H1 (cell line): ENCODE measurements at regions of chr5 and their contacts with region 1.

Region 1: DNA sequence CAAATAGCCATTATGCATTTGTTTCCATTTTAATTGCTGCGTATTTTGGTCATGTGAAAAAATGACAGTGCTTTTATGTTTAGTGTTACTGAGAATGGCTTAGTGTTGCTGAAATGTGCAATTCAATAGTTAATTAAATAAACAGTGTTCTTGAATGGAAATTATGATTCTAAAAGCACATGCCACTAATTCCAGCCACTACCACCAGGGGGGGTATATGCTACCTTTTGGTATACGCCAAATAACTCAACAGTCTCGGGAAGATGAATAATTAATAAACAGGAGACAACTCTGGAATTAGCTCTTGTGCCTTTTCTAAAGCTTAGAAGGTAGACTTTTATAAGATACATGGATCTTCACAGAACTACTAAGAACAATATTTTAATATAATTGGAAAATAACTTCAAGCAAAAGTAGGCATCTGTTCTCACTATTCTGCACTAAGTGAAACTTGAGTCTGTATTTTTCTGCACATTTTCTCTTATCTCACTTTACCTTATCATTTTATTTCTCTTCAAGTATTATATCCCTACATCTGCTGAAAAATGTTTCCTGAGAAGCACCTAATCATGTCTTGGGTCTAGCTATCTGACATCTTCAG is 83.5 kb upstream of the MINAR2 start:
- DNase-seq: peak in 1 of 2 experiments; percentile 66
- H3K4me3 ChIP-seq: no peak overlapping the region
- H3K27ac ChIP-seq: no peak overlapping the region
- H3K4me1 ChIP-seq: no peaks in the 10 kb centered on the region
- H3K27me3 ChIP-seq: no peaks in the 10 kb centered on the region
- CTCF ChIP-seq: peak in 2 of 3 experiments; percentile 45 to 68; a peak in 2 of 4 replicates
- EP300 ChIP-seq: no peak
- POLR2A ChIP-seq: no peak
- RAD21 ChIP-seq: peak; percentile 42 to 59

Region 2: DNA sequence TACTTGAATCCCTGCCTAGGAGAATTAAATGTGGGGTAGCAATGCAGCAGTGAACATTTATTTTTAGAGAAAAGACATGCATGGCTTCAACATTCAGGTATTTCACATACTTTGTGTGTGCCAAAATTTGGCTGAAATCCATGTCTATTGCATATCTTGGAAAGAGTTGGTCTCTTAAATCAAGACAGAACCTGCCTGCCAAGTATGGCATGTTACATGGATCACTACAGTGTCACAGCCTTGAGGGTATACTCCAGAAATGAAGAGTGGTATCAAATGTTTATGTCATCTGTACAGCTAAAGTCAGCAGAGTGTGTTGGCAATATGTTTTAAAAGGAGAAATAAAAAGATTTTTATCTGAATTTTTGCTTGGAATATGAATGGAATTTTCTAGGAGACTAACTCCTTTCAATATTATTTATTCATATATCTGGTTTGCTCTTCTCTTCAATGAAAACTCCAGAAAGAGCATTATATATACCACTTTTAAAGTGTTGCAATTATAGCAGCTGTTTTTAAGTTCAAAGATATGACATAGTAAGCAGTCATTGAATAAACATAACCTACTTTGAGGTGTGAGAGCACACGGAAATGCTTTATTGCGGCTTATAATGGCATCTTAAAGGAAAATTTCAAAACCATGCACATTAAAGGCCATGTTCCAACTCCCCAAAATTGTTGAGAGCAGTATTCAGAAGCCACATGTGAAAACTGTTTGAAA is 11.9 kb before region 1 on chr5:
- CTCF ChIA-PET with region 1: interaction called, 15 read pairs
- POLR2A ChIA-PET with region 1: no interaction called
- DNase-seq: no peak
- H3K4me3 ChIP-seq: no peak overlapping the region
- H3K27ac ChIP-seq: no peak overlapping the region
- H3K4me1 ChIP-seq: peaks cover 0 to 4% (median 1%) of the 10 kb centered on the region in 4 experiments; a peak in 2 of 7 replicates
- H3K27me3 ChIP-seq: no peaks in the 10 kb centered on the region
- CTCF ChIP-seq: no peak
- EP300 ChIP-seq: no peak
- POLR2A ChIP-seq: no peak
- RAD21 ChIP-seq: no peak

Region 3: GRCh38 chr5:129691220-129691619 is 26.8 kb after region 1 on chr5:
- CTCF ChIA-PET with region 1: interaction called, 16 read pairs
- POLR2A ChIA-PET with region 1: no interaction called
- DNase-seq: no peak
- H3K4me3 ChIP-seq: no peak overlapping the region
- H3K27ac ChIP-seq: no peak overlapping the region
- H3K4me1 ChIP-seq: no peaks in the 10 kb centered on the region
- H3K27me3 ChIP-seq: no peaks in the 10 kb centered on the region
- CTCF ChIP-seq: no peak
- EP300 ChIP-seq: no peak
- POLR2A ChIP-seq: no peak
- RAD21 ChIP-seq: no peak

Region 4: GRCh38 chr5:129696636-129697035 is 32.2 kb after region 1 on chr5:
- CTCF ChIA-PET with region 1: interaction called, 16 read pairs
- POLR2A ChIA-PET with region 1: no interaction called
- DNase-seq: no peak
- H3K4me3 ChIP-seq: no peak overlapping the region
- H3K27ac ChIP-seq: no peak overlapping the region
- H3K4me1 ChIP-seq: no peaks in the 10 kb centered on the region
- H3K27me3 ChIP-seq: peaks cover 0 to 1% (median 0%) of the 10 kb centered on the region in 4 experiments; a peak in 1 of 7 replicates
- CTCF ChIP-seq: peak in 1 of 3 experiments; percentile 16; a peak in 2 of 4 replicates
- EP300 ChIP-seq: no peak
- POLR2A ChIP-seq: no peak
- RAD21 ChIP-seq: peak in 1 of 2 experiments; percentile 34; a peak in 2 of 4 replicates